ENCODE measurements at regions of chr11 and their contacts with region 1.

Region 1: GRCh38 chr11:73965076-73965860 is 14.4 kb downstream of the DNAJB13 start:
- DNase-seq: no peak
- H3K4me3 ChIP-seq: no peak overlapping the region
- H3K27ac ChIP-seq: no peak overlapping the region
- H3K4me1 ChIP-seq: peaks cover 5 to 8% of the 10 kb centered on the region in 2 experiments; a peak in 2 of 4 replicates
- H3K27me3 ChIP-seq: no peaks in the 10 kb centered on the region
- CTCF ChIP-seq: no peak
- EP300 ChIP-seq: no peak
- RAD21 ChIP-seq: no peak

Region 2: DNA sequence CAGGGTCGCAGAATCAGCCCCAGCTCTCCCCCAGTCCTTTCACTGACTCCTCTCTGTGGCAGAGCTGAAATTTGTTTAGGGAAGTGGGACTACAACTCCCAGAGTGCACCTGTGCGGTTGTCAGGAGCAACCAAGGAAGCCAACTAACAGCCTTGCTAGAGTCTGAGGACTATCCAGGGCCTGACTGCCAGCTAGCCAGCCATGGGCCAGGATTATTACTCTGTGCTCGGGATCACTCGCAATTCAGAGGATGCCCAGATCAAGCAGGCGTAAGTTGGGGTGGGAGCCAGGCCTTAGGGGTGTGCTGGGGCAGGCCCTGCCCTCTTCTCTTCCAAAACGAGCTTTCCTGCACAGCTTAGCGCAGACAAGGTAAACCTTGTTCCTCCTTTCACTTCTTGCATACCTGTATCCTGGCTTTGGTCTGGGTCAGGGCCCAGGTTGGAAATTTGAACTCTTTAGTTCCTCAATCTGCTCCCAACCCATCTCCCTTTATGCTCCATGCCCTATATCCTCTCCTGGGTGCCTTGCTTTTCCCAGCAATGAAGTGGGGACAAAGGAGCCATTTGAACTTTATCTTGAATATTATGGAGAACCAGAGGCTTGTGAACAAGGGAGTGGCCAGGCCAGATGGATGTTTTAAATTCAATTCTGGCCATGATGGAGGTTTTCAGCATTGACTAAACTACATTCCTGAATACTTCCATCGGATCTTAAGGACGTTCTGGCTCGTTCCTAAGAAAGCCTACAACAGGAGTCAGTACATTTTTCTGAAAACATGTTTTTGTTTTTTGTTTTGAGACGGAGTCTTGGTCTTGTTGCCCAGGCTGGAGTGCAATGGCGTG is 14.2 kb before region 1 on chr11 and contains the start of gene DNAJB13:
- CTCF ChIA-PET with region 1: interaction called, 12 read pairs
- POLR2A ChIA-PET with region 1: no interaction called
- DNase-seq: peak; percentile 72
- H3K4me3 ChIP-seq: no peak within 1 kb of the TSS
- H3K27ac ChIP-seq: no peak within 1 kb of the TSS
- H3K4me1 ChIP-seq: no peaks in the 10 kb centered on the region; a peak in 2 of 4 replicates
- H3K27me3 ChIP-seq: no peaks in the 10 kb centered on the region
- CTCF ChIP-seq: no peak
- EP300 ChIP-seq: no peak
- RAD21 ChIP-seq: no peak
- polyA plus RNA-seq, gene DNAJB13: 0.49 and 0.51 TPM in 2 replicates

Region 3: GRCh38 chr11:73982969-73983740 is 17.9 kb after region 1 on chr11:
- CTCF ChIA-PET with region 1: interaction called, 21 read pairs
- POLR2A ChIA-PET with region 1: interaction called, 15 read pairs
- DNase-seq: peak; percentile 97
- H3K4me3 ChIP-seq: peak overlapping the region; percentile 70 to 93
- H3K27ac ChIP-seq: peak overlapping the region; percentile 87 to 98
- H3K4me1 ChIP-seq: peaks cover 7 to 22% of the 10 kb centered on the region in 2 experiments; a peak in 2 of 4 replicates
- H3K27me3 ChIP-seq: no peaks in the 10 kb centered on the region
- CTCF ChIP-seq: no peak
- EP300 ChIP-seq: no peak; a peak in 1 of 4 replicates
- RAD21 ChIP-seq: no peak